Esophagus muscularis mucosa (tissue), 4 donors: ENCODE measurements at regions of chr4 and their contacts with region 1.

Region 1: GRCh38 chr4:77156533-77156911 is 485 bp upstream of the CCNG2 start:
- DNase-seq: peak; percentile 99
- H3K4me3 ChIP-seq: peak overlapping the region; percentile 74 to 98 (median 96)
- H3K27ac ChIP-seq: peak overlapping the region; percentile 83 to 97 (median 95)
- H3K4me1 ChIP-seq: peaks cover 5 to 38% (median 29%) of the 10 kb centered on the region in 4 donors
- H3K27me3 ChIP-seq: no peaks in the 10 kb centered on the region
- CTCF ChIP-seq: no peak
- EP300 ChIP-seq: no peak
- POLR2A ChIP-seq: no peak

Region 2: GRCh38 chr4:77075869-77076799 is 80.4 kb before region 1 on chr4 and contains the start of gene CCNI:
- intact Hi-C with region 1: loop called (anchors 5 kb)
- DNase-seq: peak; percentile 98
- H3K4me3 ChIP-seq: peak within 1 kb of the TSS; percentile 95 to 99 (median 98)
- H3K27ac ChIP-seq: peak within 1 kb of the TSS; percentile 100
- H3K4me1 ChIP-seq: peaks cover 30 to 64% (median 50%) of the 10 kb centered on the region in 4 donors
- H3K27me3 ChIP-seq: no peaks in the 10 kb centered on the region
- CTCF ChIP-seq: no peak
- EP300 ChIP-seq: no peak
- POLR2A ChIP-seq: peak; percentile 48
- total RNA-seq, gene CCNI: 342 to 444 (median 375) TPM

Region 3: GRCh38 chr4:77095101-77095821 is 61.3 kb before region 1 on chr4:
- intact Hi-C with region 1: loop called (anchors 5 kb)
- DNase-seq: no peak
- H3K4me3 ChIP-seq: no peak overlapping the region
- H3K27ac ChIP-seq: no peak overlapping the region
- H3K4me1 ChIP-seq: peaks cover 3 to 19% (median 11%) of the 10 kb centered on the region in 4 donors
- H3K27me3 ChIP-seq: no peaks in the 10 kb centered on the region
- CTCF ChIP-seq: peak; percentile 79 to 88 (median 85)
- EP300 ChIP-seq: no peak
- POLR2A ChIP-seq: no peak